Activated T-helper 1 cell treated with anti-CD3 and anti-CD28 coated beads, Interleukin-12 subunit alpha, Interleukin-12 subunit beta, Interleukin-2, Interleukin-4 antibody, amounts not matched to agents 30 ng/mL and 10 ng/mL and 1 ng/mL, durations not matched to agents 14 hours and 24 hours and 36 hours (primary cell): ENCODE measurements at regions of chr1 and their contacts with region 1.

Region 1: GRCh38 chr1:108746372-108747205 is at the start of gene STXBP3:
- DNase-seq: peak; percentile 98
- H3K4me3 Mint-ChIP-seq: peak within 1 kb of the TSS; percentile 97
- H3K27ac Mint-ChIP-seq: peak within 1 kb of the TSS; percentile 100
- H3K4me1 Mint-ChIP-seq: peaks cover 35% of the 10 kb centered on the region
- H3K27me3 Mint-ChIP-seq: peaks cover 3% of the 10 kb centered on the region
- total RNA-seq, gene STXBP3: 39.6 and 42.4 TPM in 2 replicates

Region 2: GRCh38 chr1:108559215-108560186 is 187.1 kb before region 1 on chr1 and contains the start of gene EEIG2:
- intact Hi-C with region 1: loop called (anchors 1 kb)
- DNase-seq: peak; percentile 85
- H3K4me3 Mint-ChIP-seq: peak within 1 kb of the TSS; percentile 92
- H3K27ac Mint-ChIP-seq: peak within 1 kb of the TSS; percentile 83
- H3K4me1 Mint-ChIP-seq: peaks cover 31% of the 10 kb centered on the region
- H3K27me3 Mint-ChIP-seq: peaks cover 4% of the 10 kb centered on the region
- total RNA-seq, gene EEIG2: 16.7 and 18.5 TPM in 2 replicates

Region 3: GRCh38 chr1:108661030-108661620 is 85.5 kb before region 1 on chr1 and contains the start of gene HENMT1:
- intact Hi-C with region 1: loop called (anchors 1 kb)
- DNase-seq: peak; percentile 71
- H3K4me3 Mint-ChIP-seq: peak within 1 kb of the TSS; percentile 87
- H3K27ac Mint-ChIP-seq: peak within 1 kb of the TSS; percentile 97
- H3K4me1 Mint-ChIP-seq: peaks cover 49% of the 10 kb centered on the region
- H3K27me3 Mint-ChIP-seq: no peaks in the 10 kb centered on the region
- total RNA-seq, gene HENMT1: 17.9 and 20.7 TPM in 2 replicates

Region 4: GRCh38 chr1:108777839-108778238 is 31.2 kb after region 1 on chr1:
- intact Hi-C with region 1: no loop called
- DNase-seq: no peak
- H3K4me3 Mint-ChIP-seq: no peak overlapping the region
- H3K27ac Mint-ChIP-seq: no peak overlapping the region
- H3K4me1 Mint-ChIP-seq: no peaks in the 10 kb centered on the region
- H3K27me3 Mint-ChIP-seq: no peaks in the 10 kb centered on the region

Region 5: GRCh38 chr1:108877348-108878159 is 131.0 kb after region 1 on chr1:
- intact Hi-C with region 1: loop called (anchors 1 kb)
- DNase-seq: no peak
- H3K4me3 Mint-ChIP-seq: peak overlapping the region; percentile 89
- H3K27ac Mint-ChIP-seq: peak overlapping the region; percentile 48
- H3K4me1 Mint-ChIP-seq: peaks cover 45% of the 10 kb centered on the region
- H3K27me3 Mint-ChIP-seq: peaks cover 6% of the 10 kb centered on the region

Region 6: GRCh38 chr1:109041621-109042468 is 295.3 kb after region 1 on chr1 and contains the start of gene WDR47:
- intact Hi-C with region 1: loop called (anchors 1 kb)
- DNase-seq: peak; percentile 96
- H3K4me3 Mint-ChIP-seq: peak within 1 kb of the TSS; percentile 91
- H3K27ac Mint-ChIP-seq: peak within 1 kb of the TSS; percentile 92
- H3K4me1 Mint-ChIP-seq: peaks cover 11% of the 10 kb centered on the region
- H3K27me3 Mint-ChIP-seq: no peaks in the 10 kb centered on the region
- total RNA-seq, gene WDR47: 11.5 and 14.4 TPM in 2 replicates

Region 7: DNA sequence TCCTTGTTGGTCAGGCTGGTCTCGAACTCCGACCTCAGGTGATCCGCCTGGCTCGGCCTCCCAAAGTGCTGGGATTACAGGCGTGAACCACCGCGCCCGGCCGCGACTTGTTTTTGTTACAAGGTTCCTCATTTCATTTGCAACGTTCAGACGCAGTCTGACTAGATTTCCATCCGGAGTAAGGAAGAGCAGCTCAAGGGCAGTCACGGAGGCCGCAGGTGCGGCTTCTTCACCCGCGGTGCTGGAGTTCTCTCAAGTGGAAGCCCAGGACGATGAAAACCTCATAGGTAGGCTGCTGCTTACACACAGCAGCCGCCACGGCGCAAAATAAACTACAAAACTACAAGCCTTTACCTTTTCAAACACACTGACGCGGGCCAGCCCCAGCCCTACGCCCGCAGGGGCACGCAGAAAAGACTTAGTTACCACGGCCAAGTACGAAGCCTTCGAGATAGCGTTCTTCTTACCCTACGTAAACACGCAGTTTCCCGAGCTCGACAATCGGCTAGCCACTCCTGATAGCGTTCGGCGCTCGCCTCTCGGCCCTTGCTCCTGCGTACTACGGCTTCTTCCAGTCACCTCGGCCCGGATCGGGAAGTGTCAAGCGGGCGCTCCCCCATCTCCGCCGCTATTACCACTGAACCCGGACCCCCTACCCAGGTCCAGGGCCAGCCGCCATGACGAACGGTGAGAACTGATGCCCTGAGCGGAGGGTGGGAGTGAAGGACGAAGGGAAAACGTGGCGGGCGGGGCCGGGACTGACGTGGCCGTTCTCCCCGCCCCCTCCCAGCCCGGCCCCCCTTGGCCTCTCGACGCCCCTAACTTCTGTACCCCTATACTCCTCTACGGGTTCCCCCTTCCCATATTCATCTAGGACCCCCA is 343.8 kb after region 1 on chr1 and contains the start of gene TMEM167B:
- intact Hi-C with region 1: loop called (anchors 2 kb)
- DNase-seq: peak; percentile 84
- H3K4me3 Mint-ChIP-seq: peak within 1 kb of the TSS; percentile 92
- H3K27ac Mint-ChIP-seq: peak within 1 kb of the TSS; percentile 93
- H3K4me1 Mint-ChIP-seq: peaks cover 21% of the 10 kb centered on the region
- H3K27me3 Mint-ChIP-seq: peaks cover 2% of the 10 kb centered on the region
- total RNA-seq, gene TMEM167B: 26.2 and 27.6 TPM in 2 replicates

Region 8: DNA sequence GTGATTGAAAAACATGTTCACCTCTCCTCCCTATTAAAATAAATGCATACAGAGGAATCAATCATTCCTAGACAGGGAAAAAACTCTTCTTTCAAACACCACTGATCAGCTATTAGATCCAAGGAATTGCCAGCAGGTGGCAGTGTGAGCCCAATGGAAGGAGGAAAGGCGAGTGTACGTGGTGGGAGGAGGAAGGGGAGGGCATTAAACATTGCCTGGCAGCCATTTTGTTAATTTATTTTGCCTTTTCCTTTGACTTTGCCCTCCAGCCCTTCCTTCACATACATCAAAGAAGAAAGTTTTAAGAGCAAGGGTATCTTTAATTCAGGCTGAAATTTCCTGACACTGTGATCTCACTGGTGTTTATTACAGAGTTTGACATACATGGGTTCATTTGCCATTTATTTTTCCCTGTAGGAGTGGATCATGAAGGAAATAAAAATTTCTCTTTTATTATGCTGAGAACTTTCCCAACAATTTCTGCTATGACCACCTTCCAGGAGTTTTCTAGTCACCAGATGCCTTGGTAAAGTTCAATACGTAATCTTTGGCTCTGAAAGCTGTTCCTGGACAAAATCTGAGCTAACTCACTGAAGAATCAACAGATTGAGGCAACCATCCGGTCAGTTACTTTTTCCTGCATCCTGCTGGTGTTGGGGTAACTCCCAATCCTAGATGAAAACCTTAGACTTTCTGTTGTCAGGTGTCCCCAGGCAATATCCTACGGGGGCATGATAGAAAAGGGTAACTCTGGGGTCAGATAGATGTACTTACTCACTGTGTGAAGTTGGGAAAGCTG is 799.9 kb after region 1 on chr1:
- intact Hi-C with region 1: no loop called
- DNase-seq: peak; percentile 82
- H3K4me3 Mint-ChIP-seq: peak overlapping the region; percentile 94
- H3K27ac Mint-ChIP-seq: peak overlapping the region; percentile 96
- H3K4me1 Mint-ChIP-seq: peaks cover 45% of the 10 kb centered on the region
- H3K27me3 Mint-ChIP-seq: peaks cover 2% of the 10 kb centered on the region